Motor neuron (in vitro differentiated cells): ENCODE measurements at regions of chr12 and their contacts with region 1.

Region 1: DNA sequence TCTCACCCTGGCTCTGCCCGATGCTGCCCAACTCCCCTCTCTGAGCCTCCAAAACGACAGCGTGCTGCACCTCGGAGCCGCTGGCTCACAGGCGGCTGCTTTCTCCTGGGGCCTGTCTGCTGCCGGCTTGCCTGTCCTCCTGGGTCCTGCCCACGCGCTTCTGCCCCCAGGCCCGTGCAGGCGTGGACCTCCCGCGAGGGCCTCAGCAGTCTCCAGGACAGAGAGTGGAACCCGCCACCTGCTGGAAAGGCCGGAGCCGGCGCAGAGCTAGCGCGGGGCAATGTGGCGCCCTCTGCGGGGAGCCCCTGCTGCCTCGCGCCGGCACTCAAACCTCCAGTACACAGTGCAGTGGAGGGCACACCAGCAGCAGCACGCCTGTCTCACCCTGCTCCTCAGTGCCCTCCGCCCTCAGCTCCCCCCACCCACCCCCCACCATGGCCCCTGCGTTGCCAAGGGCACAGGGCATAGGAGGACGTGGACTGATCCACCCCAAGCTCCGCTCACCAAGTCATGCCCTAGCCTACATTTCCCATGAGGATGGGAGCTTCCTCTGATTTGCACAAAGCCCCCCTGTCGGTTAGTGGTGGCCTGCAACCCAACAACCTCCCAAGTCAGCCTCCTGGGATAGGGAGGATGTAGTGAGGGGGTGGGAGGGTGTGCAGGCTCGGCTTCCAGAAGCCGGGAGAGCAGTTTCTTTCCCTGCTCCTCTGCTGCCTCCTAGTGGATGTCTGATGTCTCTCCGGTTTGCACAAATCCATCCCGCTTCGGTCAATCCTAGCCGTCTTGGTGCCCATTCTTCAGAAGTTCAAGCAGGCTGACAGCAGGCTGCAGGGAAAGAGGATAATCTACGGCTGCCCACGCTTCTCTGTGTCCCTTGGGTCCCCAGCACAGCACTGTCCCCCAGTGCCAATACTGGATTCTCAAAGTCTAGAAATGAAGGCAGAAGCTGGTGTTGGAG is 25.2 kb downstream of the KRT8 start:
- ATAC-seq: peak; percentile 80 to 93 (median 88)
- H3K4me3 ChIP-seq: no peak overlapping the region
- H3K27ac ChIP-seq: no peak overlapping the region
- H3K4me1 ChIP-seq: peaks cover 0 to 2% of the 10 kb centered on the region in 2 donors

Region 2: GRCh38 chr12:52156736-52157565 is 722.7 kb before region 1 on chr12:
- in situ Hi-C with region 1: loop called in 1 of 9 experiments (anchors 10 kb)
- ATAC-seq: peak; percentile 28 to 84 (median 76)
- H3K4me3 ChIP-seq: no peak overlapping the region
- H3K27ac ChIP-seq: no peak overlapping the region
- H3K4me1 ChIP-seq: no peaks in the 10 kb centered on the region

Region 3: GRCh38 chr12:52372216-52373154 is 507.2 kb before region 1 on chr12:
- in situ Hi-C with region 1: loop called in 3 of 9 experiments (anchors 10 to 25 kb)
- ATAC-seq: peak; percentile 62 to 97 (median 76)
- H3K4me3 ChIP-seq: no peak overlapping the region
- H3K27ac ChIP-seq: no peak overlapping the region
- H3K4me1 ChIP-seq: no peaks in the 10 kb centered on the region

Region 4: DNA sequence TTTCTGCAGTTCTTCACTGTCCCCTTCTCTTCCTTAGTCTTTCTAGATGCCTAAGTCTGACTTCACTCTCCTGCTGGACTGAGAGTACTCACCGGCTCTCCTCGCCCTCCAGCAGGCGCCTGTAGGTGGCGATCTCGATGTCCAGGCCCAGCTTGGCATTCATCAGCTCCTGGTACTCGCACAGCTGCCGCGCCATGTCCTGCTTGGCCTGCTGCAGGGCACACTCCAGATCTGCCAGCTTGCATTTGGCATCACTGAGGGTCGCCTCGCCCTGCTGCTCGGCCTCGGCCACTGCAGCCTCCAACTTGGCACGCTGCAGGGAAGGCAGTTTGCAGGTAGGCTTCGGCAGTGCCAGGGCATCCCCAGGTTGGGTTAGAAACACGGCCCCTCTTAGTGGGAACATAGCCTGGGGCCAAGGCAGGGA is 499.4 kb before region 1 on chr12:
- in situ Hi-C with region 1: loop called in 2 of 9 experiments (anchors 10 to 25 kb)
- ATAC-seq: peak in 4 of 8 experiments; percentile 33 to 67 (median 46)
- H3K4me3 ChIP-seq: no peak overlapping the region
- H3K27ac ChIP-seq: no peak overlapping the region
- H3K4me1 ChIP-seq: no peaks in the 10 kb centered on the region

Region 5: GRCh38 chr12:52582971-52583456 is 296.7 kb before region 1 on chr12:
- in situ Hi-C with region 1: loop called in 3 of 9 experiments (anchors 5 to 25 kb)
- ATAC-seq: peak; percentile 50 to 91 (median 74)
- H3K4me3 ChIP-seq: no peak overlapping the region
- H3K27ac ChIP-seq: no peak overlapping the region
- H3K4me1 ChIP-seq: no peaks in the 10 kb centered on the region

Region 6: DNA sequence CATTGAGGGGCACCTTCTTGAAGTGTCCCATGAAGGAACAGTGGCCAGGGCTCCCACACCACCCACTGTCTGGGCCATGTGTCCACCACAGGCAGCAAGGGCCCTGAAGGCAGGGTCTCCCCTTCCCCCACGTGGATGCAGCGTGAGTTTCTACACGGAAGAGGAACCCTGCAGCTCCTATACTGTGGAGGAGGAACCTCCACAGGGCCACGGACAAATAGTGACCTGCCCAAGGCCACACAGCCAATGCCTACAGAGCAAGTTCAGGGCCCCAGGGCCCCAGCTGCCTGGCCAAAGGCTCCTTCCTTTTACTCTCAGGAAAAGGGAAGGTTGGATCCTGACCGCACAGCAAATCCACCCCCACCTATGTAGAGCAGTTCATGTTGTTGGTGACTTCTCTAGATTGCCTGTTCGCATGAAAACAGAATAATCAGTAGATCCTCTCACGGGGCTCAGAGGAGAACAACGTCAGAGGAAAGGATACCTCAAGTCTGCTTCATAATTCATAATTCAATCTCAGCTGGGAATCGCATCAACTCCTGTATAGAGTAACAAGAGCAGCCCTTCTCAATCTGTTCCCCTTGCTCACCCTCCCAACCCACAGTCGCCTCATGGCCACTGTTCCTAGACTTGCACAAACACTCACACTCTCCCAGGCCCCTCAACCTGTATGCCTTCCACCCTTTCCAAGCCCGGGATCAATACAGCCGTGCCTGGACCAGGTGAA is 250.2 kb before region 1 on chr12:
- in situ Hi-C with region 1: no loop called
- ATAC-seq: no peak
- H3K4me3 ChIP-seq: no peak overlapping the region
- H3K27ac ChIP-seq: no peak overlapping the region
- H3K4me1 ChIP-seq: no peaks in the 10 kb centered on the region

Region 7: DNA sequence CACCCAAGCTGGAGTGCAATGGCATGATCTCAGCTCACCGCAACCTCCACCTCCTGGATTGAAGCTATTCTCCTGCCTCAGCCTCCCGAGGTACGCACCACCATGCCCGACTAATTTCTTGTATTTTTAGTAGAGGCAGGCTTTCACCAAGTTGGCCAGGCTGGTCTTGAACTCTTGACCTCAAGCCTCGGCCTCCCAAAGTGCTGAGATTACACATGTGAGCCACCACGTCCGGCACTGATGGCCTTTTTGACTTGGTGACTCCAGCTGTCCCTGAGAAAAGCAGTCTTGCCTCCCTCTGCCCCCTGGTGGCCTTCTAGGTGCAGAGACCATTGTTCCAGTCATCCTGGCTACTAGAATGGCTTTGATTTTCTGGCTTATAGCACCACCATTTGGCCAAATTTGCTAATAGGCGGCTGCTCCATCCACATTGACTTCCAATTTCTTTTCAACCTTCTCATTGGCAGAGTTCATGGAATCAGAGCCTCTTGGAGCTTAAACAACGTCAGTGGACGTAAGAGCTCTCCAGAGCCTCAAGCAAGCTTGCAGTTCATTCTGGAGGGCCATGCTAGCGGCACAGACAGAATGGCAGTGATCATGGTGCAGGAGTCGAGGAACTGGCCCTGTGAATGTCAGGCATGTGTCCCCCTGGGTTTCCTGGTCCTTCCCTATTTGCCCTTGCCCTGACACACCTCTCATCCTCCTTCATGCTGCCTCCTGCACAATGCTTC is 101.2 kb after region 1 on chr12:
- in situ Hi-C with region 1: loop called in 8 of 9 experiments (anchors 5 to 10 kb)
- ATAC-seq: peak; percentile 92 to 97 (median 94)
- H3K4me3 ChIP-seq: no peak overlapping the region
- H3K27ac ChIP-seq: no peak overlapping the region
- H3K4me1 ChIP-seq: peaks cover 0 to 7% of the 10 kb centered on the region in 2 donors